ENCODE measurements at regions of chr11 and their contacts with region 1.

Region 1: GRCh38 chr11:3849297-3849874 is 6.1 kb upstream of the STIM1 start:
- DNase-seq: peak in 7 of 9 donors; percentile 45 to 72 (median 62)
- ATAC-seq: peak; percentile 82
- H3K4me3 ChIP-seq: no peak overlapping the region
- H3K4me3 Mint-ChIP-seq: no peak overlapping the region
- H3K27ac ChIP-seq: no peak overlapping the region
- H3K27ac Mint-ChIP-seq: peak overlapping the region in 8 of 9 donors; percentile 7 to 80 (median 62)
- H3K4me1 ChIP-seq: peaks cover 20 to 33% of the 10 kb centered on the region in 2 donors
- H3K4me1 Mint-ChIP-seq: peaks cover 28 to 61% (median 42%) of the 10 kb centered on the region in 7 donors
- H3K27me3 ChIP-seq: no peaks in the 10 kb centered on the region
- H3K27me3 Mint-ChIP-seq: no peaks in the 10 kb centered on the region

Region 2: GRCh38 chr11:3824714-3825472 is 24.5 kb before region 1 on chr11:
- CTCF ChIA-PET with region 1: interaction called, 12 read pairs
- POLR2A ChIA-PET with region 1: interaction called, 399 read pairs
- intact Hi-C with region 1: loop called in 1 of 2 experiments (anchors 1 kb)
- DNase-seq: peak; percentile 65 to 83 (median 77)
- ATAC-seq: peak; percentile 97
- H3K4me3 ChIP-seq: no peak overlapping the region
- H3K4me3 Mint-ChIP-seq: no peak overlapping the region
- H3K27ac ChIP-seq: peak overlapping the region; percentile 38
- H3K27ac Mint-ChIP-seq: peak overlapping the region; percentile 60 to 96 (median 87)
- H3K4me1 ChIP-seq: peaks cover 13 to 14% of the 10 kb centered on the region in 2 donors
- H3K4me1 Mint-ChIP-seq: peaks cover 15 to 46% (median 44%) of the 10 kb centered on the region in 7 donors
- H3K27me3 ChIP-seq: no peaks in the 10 kb centered on the region
- H3K27me3 Mint-ChIP-seq: no peaks in the 10 kb centered on the region

Region 3: DNA sequence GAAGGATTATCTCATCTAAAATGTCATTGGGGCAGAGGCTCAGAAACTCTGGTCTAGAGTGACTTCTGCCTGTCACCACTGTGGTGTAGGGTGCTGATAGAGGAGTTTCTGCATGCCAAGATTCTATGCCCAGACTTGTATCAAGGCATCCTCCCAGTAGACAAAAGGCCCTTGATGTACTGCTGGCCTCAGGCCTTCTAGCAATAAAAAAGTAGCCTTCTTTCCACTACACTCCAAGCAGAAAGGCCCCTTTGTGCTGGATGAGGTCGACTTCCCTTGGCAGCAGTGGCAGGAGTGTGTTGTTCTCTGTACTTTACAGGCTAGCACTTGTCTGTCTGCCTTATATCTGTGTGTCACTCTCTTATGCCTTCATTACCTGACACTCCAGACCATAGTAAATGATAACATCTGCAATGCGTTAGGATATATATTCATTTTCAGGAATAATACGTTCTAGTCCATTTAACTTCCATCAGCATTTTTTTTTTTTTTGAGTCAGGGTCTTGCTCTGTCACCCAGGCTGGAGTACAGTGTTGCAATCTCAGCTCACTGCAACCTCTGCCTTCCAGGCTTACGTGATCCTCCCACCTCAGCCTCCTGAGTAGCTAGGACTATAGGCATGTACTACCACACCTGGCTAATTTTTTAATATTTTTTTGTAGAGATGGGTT is 195.7 kb after region 1 on chr11:
- CTCF ChIA-PET with region 1: interaction called, 11 read pairs
- POLR2A ChIA-PET with region 1: interaction called, 3 read pairs
- intact Hi-C with region 1: no loop called
- DNase-seq: no peak
- ATAC-seq: no peak
- H3K4me3 ChIP-seq: no peak overlapping the region
- H3K4me3 Mint-ChIP-seq: peak overlapping the region in 1 of 10 donors; percentile 12
- H3K27ac ChIP-seq: no peak overlapping the region
- H3K27ac Mint-ChIP-seq: peak overlapping the region in 8 of 9 donors; percentile 5 to 77 (median 57)
- H3K4me1 ChIP-seq: no peaks in the 10 kb centered on the region
- H3K4me1 Mint-ChIP-seq: peaks cover 22 to 53% (median 46%) of the 10 kb centered on the region in 7 donors
- H3K27me3 ChIP-seq: no peaks in the 10 kb centered on the region
- H3K27me3 Mint-ChIP-seq: no peaks in the 10 kb centered on the region

Region 4: GRCh38 chr11:4065601-4066377 is 216.4 kb after region 1 on chr11:
- CTCF ChIA-PET with region 1: interaction called, 164 read pairs
- POLR2A ChIA-PET with region 1: interaction called, 110 read pairs
- intact Hi-C with region 1: no loop called
- DNase-seq: no peak
- ATAC-seq: no peak
- H3K4me3 ChIP-seq: no peak overlapping the region
- H3K4me3 Mint-ChIP-seq: peak overlapping the region in 2 of 10 donors; percentile 2 to 35
- H3K27ac ChIP-seq: peak overlapping the region; percentile 15
- H3K27ac Mint-ChIP-seq: peak overlapping the region in 8 of 9 donors; percentile 55 to 86 (median 72)
- H3K4me1 ChIP-seq: peaks cover 26 to 47% of the 10 kb centered on the region in 2 donors
- H3K4me1 Mint-ChIP-seq: peaks cover 49 to 70% (median 69%) of the 10 kb centered on the region in 7 donors
- H3K27me3 ChIP-seq: no peaks in the 10 kb centered on the region
- H3K27me3 Mint-ChIP-seq: no peaks in the 10 kb centered on the region

Region 5: GRCh38 chr11:5581014-5581413 is 1731.6 kb after region 1 on chr11:
- CTCF ChIA-PET with region 1: no interaction called
- POLR2A ChIA-PET with region 1: no interaction called
- intact Hi-C with region 1: no loop called
- DNase-seq: no peak
- ATAC-seq: no peak
- H3K4me3 ChIP-seq: no peak overlapping the region
- H3K4me3 Mint-ChIP-seq: no peak overlapping the region
- H3K27ac ChIP-seq: no peak overlapping the region
- H3K27ac Mint-ChIP-seq: no peak overlapping the region
- H3K4me1 ChIP-seq: no peaks in the 10 kb centered on the region
- H3K4me1 Mint-ChIP-seq: no peaks in the 10 kb centered on the region
- H3K27me3 ChIP-seq: no peaks in the 10 kb centered on the region
- H3K27me3 Mint-ChIP-seq: peaks cover 0 to 2% (median 0%) of the 10 kb centered on the region in 5 donors

Measured in naive thymus-derived CD4-positive, alpha-beta T cell (primary cell).